Heart left ventricle (tissue), 16 donors: ENCODE measurements at regions of chr12 and their contacts with region 1.

Region 1: DNA sequence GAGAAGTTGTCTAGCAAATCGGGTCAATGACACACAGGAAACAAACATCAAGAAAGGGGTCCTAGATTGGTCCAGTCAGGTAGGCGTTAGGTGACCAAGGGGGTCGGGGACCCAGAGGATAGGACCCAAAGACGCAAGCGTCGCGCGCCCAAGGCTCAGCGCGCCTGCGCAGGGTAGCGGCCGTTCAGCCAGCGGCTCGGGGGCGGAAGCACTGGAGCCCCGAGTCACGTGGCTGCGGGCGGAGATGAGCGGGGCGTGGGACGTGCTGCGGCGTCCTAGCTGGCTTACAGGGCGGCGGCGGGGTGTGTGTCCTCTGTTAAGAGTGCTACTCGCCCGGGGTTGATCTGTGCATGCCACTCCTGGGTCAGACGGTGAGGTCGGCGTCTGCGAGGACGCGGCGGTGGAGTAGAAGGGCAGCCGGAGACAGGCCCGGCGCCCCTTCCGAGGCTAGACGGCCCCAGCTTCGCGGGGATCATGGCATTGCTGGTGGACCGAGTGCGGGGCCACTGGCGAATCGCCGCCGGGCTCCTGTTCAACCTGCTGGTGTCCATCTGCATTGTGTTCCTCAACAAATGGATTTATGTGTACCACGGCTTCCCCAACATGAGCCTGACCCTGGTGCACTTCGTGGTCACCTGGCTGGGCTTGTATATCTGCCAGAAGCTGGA is at the start of gene SLC35E3:
- DNase-seq: peak; percentile 91 to 97 (median 95)
- ATAC-seq: peak; percentile 99 to 100 (median 100)
- H3K4me3 ChIP-seq: peak within 1 kb of the TSS; percentile 40 to 92 (median 79)
- H3K27ac ChIP-seq: peak within 1 kb of the TSS; percentile 1 to 84 (median 79)
- H3K4me1 ChIP-seq: peaks cover 0 to 26% (median 11%) of the 10 kb centered on the region in 12 donors
- H3K27me3 ChIP-seq: no peaks in the 10 kb centered on the region
- CTCF ChIP-seq: no peak
- POLR2A ChIP-seq: peak in 1 of 2 donors; percentile 79
- total RNA-seq, gene SLC35E3: 2.6 to 8.6 (median 5.4) TPM

Region 2: GRCh38 chr12:68786929-68787328 is 40.9 kb after region 1 on chr12:
- intact Hi-C with region 1: loop called in 1 of 10 experiments (anchors 5 kb)
- DNase-seq: no peak
- ATAC-seq: no peak
- H3K4me3 ChIP-seq: no peak overlapping the region
- H3K27ac ChIP-seq: peak overlapping the region in 9 of 12 donors; percentile 12 to 87 (median 44)
- H3K4me1 ChIP-seq: peaks cover 0 to 50% (median 0%) of the 10 kb centered on the region in 12 donors
- H3K27me3 ChIP-seq: no peaks in the 10 kb centered on the region
- CTCF ChIP-seq: no peak
- POLR2A ChIP-seq: no peak

Region 3: DNA sequence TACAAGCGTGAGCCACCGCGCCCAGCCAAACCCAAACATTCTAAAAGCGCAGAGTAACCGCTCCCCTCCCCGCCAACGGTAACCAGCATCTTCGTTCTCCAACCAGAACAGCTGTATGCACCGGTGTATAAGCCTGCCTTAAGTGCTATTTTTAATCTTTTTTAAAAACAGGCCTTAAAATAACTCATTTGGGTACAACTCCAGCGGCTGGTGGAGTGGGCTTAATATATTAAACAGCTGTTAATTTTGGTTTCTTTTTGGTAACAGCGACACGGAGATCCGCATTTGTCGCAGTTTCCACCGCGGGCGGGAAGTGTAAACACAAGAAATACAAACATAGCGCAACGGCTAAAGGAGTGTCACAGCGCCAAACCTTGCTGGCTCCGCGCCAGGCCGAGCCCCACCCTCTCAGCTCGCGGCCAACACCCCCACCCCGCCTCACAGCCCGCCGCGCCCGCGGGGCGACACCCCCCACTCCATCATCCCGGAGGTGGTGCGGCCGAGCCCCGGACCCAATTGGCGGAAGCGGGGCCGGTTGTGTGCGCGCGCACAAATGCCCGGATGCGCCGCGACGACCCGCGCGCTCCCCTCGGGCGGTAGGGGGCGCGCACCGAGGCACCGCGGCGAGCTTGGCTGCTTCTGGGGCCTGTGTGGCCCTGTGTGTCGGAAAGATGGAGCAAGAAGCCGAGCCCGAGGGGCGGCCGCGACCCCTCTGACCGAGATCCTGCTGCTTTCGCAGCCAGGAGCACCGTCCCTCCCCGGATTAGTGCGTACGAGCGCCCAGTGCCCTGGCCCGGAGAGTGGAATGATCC is 61.7 kb after region 1 on chr12 and contains the start of gene MDM2:
- intact Hi-C with region 1: loop called (anchors 1 to 10 kb)
- DNase-seq: peak; percentile 94 to 99 (median 96)
- ATAC-seq: peak; percentile 96 to 97 (median 96)
- H3K4me3 ChIP-seq: peak within 1 kb of the TSS; percentile 71 to 98 (median 87)
- H3K27ac ChIP-seq: peak within 1 kb of the TSS; percentile 92 to 100 (median 96)
- H3K4me1 ChIP-seq: peaks cover 0 to 47% (median 13%) of the 10 kb centered on the region in 12 donors
- H3K27me3 ChIP-seq: no peaks in the 10 kb centered on the region
- CTCF ChIP-seq: peak; percentile 76 to 97 (median 86)
- POLR2A ChIP-seq: peak in 1 of 2 donors; percentile 74
- total RNA-seq, gene MDM2: 41.0 to 78.8 (median 50.9) TPM

Region 4: GRCh38 chr12:69239352-69239921 is 493.4 kb after region 1 on chr12 and contains the start of gene CPSF6:
- intact Hi-C with region 1: loop called in 1 of 10 experiments (anchors 10 kb)
- DNase-seq: peak; percentile 97 to 99 (median 97)
- ATAC-seq: peak; percentile 99 to 100 (median 100)
- H3K4me3 ChIP-seq: peak within 1 kb of the TSS; percentile 75 to 99 (median 86)
- H3K27ac ChIP-seq: peak within 1 kb of the TSS; percentile 85 to 98 (median 93)
- H3K4me1 ChIP-seq: peaks cover 9 to 44% (median 35%) of the 10 kb centered on the region in 12 donors
- H3K27me3 ChIP-seq: no peaks in the 10 kb centered on the region
- CTCF ChIP-seq: peak in 6 of 12 donors; percentile 5 to 27 (median 14)
- POLR2A ChIP-seq: peak in 1 of 2 donors; percentile 92
- total RNA-seq, gene CPSF6: 15.8 to 34.8 (median 30.1) TPM